Heart left ventricle (tissue), 16 donors: ENCODE measurements at regions of chr1 and their contacts with region 1.

Region 1: GRCh38 chr1:53278201-53278725 is 39.9 kb upstream of the MAGOH start:
- DNase-seq: peak in 4 of 5 donors; percentile 33 to 45 (median 39)
- ATAC-seq: peak in 2 of 4 donors; percentile 50 to 68
- H3K4me3 ChIP-seq: no peak overlapping the region
- H3K27ac ChIP-seq: no peak overlapping the region
- H3K4me1 ChIP-seq: no peaks in the 10 kb centered on the region
- H3K27me3 ChIP-seq: no peaks in the 10 kb centered on the region
- CTCF ChIP-seq: peak; percentile 79 to 93 (median 88)
- POLR2A ChIP-seq: no peak

Region 2: GRCh38 chr1:53393325-53393792 is 115.1 kb after region 1 on chr1:
- intact Hi-C with region 1: loop called (anchors 1 kb)
- DNase-seq: peak; percentile 64 to 87 (median 67)
- ATAC-seq: peak; percentile 63 to 89 (median 82)
- H3K4me3 ChIP-seq: no peak overlapping the region
- H3K27ac ChIP-seq: no peak overlapping the region
- H3K4me1 ChIP-seq: peaks cover 0 to 8% (median 0%) of the 10 kb centered on the region in 12 donors
- H3K27me3 ChIP-seq: peaks cover 0 to 20% (median 0%) of the 10 kb centered on the region in 9 donors
- CTCF ChIP-seq: peak; percentile 77 to 97 (median 94)
- POLR2A ChIP-seq: no peak

Region 3: GRCh38 chr1:53754484-53755312 is 476.4 kb after region 1 on chr1:
- intact Hi-C with region 1: loop called in 1 of 10 experiments (anchors 5 kb)
- DNase-seq: peak in 1 of 5 donors; percentile 13
- ATAC-seq: peak in 2 of 4 donors; percentile 48 to 49
- H3K4me3 ChIP-seq: no peak overlapping the region
- H3K27ac ChIP-seq: no peak overlapping the region
- H3K4me1 ChIP-seq: no peaks in the 10 kb centered on the region
- H3K27me3 ChIP-seq: no peaks in the 10 kb centered on the region
- CTCF ChIP-seq: peak; percentile 48 to 77 (median 66)
- POLR2A ChIP-seq: no peak